B cell (primary cell): ENCODE measurements at regions of chr3 and their contacts with region 1.

Region 1: DNA sequence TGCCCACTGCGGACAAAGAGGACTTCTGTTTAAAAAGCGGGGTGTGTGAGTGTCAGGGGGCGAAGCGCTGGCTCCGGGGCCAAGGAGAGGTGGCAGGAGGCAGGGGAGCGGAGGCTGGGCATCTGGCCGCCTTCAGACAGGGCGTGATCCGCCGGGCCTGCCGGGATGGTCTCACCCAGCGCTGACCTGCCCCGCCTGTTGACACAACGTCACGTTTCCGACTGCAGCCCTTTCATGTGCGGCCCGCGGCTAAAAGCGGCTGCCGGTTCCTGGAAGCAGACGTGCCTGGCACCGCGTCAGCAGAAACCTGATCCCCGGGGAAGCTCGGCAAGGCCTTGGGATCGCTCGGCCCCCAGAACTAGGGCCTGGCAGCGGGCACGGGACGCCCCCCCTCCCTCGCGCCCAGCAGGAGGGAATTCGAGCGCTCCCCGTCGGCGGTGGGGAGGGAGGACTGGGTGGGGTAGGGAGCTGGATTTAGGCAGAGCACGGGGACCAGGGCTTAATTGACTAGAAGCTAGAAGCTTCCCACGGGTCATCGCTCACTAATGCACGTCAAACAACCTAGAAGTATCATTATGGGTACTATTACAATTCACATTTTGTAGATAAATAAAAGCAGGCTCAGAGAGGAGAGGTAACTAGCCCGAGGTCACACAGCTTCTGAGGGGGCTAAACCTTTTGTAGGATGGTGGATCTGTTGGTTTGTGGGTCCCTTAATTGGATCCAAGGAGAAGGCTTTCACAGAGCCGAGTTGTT is 7.7 kb downstream of the BHLHE40 start:
- DNase-seq: peak; percentile 77
- ATAC-seq: peak; percentile 42
- H3K4me3 ChIP-seq: peak overlapping the region; percentile 0 to 71 (median 68)
- H3K4me3 Mint-ChIP-seq: peak overlapping the region; percentile 90
- H3K27ac ChIP-seq: peak overlapping the region; percentile 86 to 92
- H3K27ac Mint-ChIP-seq: peak overlapping the region; percentile 94
- H3K4me1 ChIP-seq: peaks cover 57 to 65% of the 10 kb centered on the region in 2 donors
- H3K4me1 Mint-ChIP-seq: peaks cover 63% of the 10 kb centered on the region
- H3K27me3 ChIP-seq: no peaks in the 10 kb centered on the region
- H3K27me3 Mint-ChIP-seq: no peaks in the 10 kb centered on the region
- CTCF ChIP-seq: no peak

Region 2: DNA sequence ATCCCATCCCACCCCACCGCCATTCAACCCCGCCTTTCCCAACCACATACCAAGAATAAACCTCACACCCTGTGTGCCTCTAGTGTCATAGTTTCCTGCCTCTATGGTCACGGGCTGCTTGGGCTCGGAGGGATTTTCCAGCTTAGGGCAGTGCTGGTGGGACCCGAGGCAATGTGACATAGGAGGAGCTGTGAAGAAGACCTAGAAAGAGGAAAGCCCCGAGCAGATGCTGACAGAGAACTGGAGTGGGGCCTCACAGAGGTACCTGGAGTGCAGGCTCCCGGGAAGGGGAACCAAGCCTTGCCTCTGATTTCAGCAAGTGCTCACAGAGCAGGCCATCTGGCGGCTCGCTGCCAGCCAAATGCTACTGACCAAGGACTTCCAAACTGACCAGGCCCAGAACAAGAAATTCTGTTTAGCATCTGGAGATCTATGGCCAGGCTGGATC is 19.8 kb after region 1 on chr3:
- CTCF ChIA-PET with region 1: interaction called, 53 read pairs
- POLR2A ChIA-PET with region 1: interaction called, 117 read pairs
- intact Hi-C with region 1: loop called (anchors 1 kb)
- DNase-seq: peak; percentile 96
- ATAC-seq: peak; percentile 50
- H3K4me3 ChIP-seq: no peak overlapping the region
- H3K4me3 Mint-ChIP-seq: peak overlapping the region; percentile 70
- H3K27ac ChIP-seq: peak overlapping the region; percentile 79 to 88
- H3K27ac Mint-ChIP-seq: peak overlapping the region; percentile 92
- H3K4me1 ChIP-seq: peaks cover 56 to 59% of the 10 kb centered on the region in 2 donors
- H3K4me1 Mint-ChIP-seq: peaks cover 56% of the 10 kb centered on the region
- H3K27me3 ChIP-seq: no peaks in the 10 kb centered on the region
- H3K27me3 Mint-ChIP-seq: no peaks in the 10 kb centered on the region
- CTCF ChIP-seq: no peak

Region 3: GRCh38 chr3:5026331-5027218 is 39.6 kb after region 1 on chr3:
- CTCF ChIA-PET with region 1: interaction called, 77 read pairs
- POLR2A ChIA-PET with region 1: interaction called, 3 read pairs
- intact Hi-C with region 1: loop called (anchors 1 kb)
- DNase-seq: peak; percentile 80
- ATAC-seq: peak; percentile 78
- H3K4me3 ChIP-seq: peak overlapping the region; percentile 21 to 64 (median 57)
- H3K4me3 Mint-ChIP-seq: peak overlapping the region; percentile 91
- H3K27ac ChIP-seq: peak overlapping the region in 1 of 2 donors; percentile 65
- H3K27ac Mint-ChIP-seq: peak overlapping the region; percentile 84
- H3K4me1 ChIP-seq: peaks cover 4 to 18% of the 10 kb centered on the region in 2 donors
- H3K4me1 Mint-ChIP-seq: peaks cover 41% of the 10 kb centered on the region
- H3K27me3 ChIP-seq: no peaks in the 10 kb centered on the region
- H3K27me3 Mint-ChIP-seq: no peaks in the 10 kb centered on the region
- CTCF ChIP-seq: peak; percentile 59

Region 4: GRCh38 chr3:5041315-5041714 is 54.4 kb after region 1 on chr3:
- CTCF ChIA-PET with region 1: no interaction called
- POLR2A ChIA-PET with region 1: no interaction called
- intact Hi-C with region 1: no loop called
- DNase-seq: no peak
- ATAC-seq: no peak
- H3K4me3 ChIP-seq: no peak overlapping the region
- H3K4me3 Mint-ChIP-seq: no peak overlapping the region
- H3K27ac ChIP-seq: no peak overlapping the region
- H3K27ac Mint-ChIP-seq: no peak overlapping the region
- H3K4me1 ChIP-seq: peaks cover 18 to 25% of the 10 kb centered on the region in 2 donors
- H3K4me1 Mint-ChIP-seq: peaks cover 26% of the 10 kb centered on the region
- H3K27me3 ChIP-seq: no peaks in the 10 kb centered on the region
- H3K27me3 Mint-ChIP-seq: no peaks in the 10 kb centered on the region
- CTCF ChIP-seq: no peak

Region 5: GRCh38 chr3:5162102-5162501 is 175.1 kb after region 1 on chr3:
- CTCF ChIA-PET with region 1: no interaction called
- POLR2A ChIA-PET with region 1: no interaction called
- intact Hi-C with region 1: no loop called
- DNase-seq: no peak
- ATAC-seq: no peak
- H3K4me3 ChIP-seq: no peak overlapping the region
- H3K4me3 Mint-ChIP-seq: peak overlapping the region; percentile 16
- H3K27ac ChIP-seq: no peak overlapping the region
- H3K27ac Mint-ChIP-seq: peak overlapping the region; percentile 5
- H3K4me1 ChIP-seq: peaks cover 13 to 26% of the 10 kb centered on the region in 2 donors
- H3K4me1 Mint-ChIP-seq: peaks cover 66% of the 10 kb centered on the region
- H3K27me3 ChIP-seq: no peaks in the 10 kb centered on the region
- H3K27me3 Mint-ChIP-seq: no peaks in the 10 kb centered on the region
- CTCF ChIP-seq: no peak

Region 6: GRCh38 chr3:5874931-5875341 is 888.0 kb after region 1 on chr3:
- CTCF ChIA-PET with region 1: no interaction called
- POLR2A ChIA-PET with region 1: no interaction called
- intact Hi-C with region 1: no loop called
- DNase-seq: no peak
- ATAC-seq: no peak
- H3K4me3 ChIP-seq: no peak overlapping the region
- H3K4me3 Mint-ChIP-seq: no peak overlapping the region
- H3K27ac ChIP-seq: no peak overlapping the region
- H3K27ac Mint-ChIP-seq: no peak overlapping the region
- H3K4me1 ChIP-seq: no peaks in the 10 kb centered on the region
- H3K4me1 Mint-ChIP-seq: no peaks in the 10 kb centered on the region
- H3K27me3 ChIP-seq: no peaks in the 10 kb centered on the region
- H3K27me3 Mint-ChIP-seq: no peaks in the 10 kb centered on the region
- CTCF ChIP-seq: no peak